ENCODE measurements at regions of chr13 and their contacts with region 1.

Region 1: DNA sequence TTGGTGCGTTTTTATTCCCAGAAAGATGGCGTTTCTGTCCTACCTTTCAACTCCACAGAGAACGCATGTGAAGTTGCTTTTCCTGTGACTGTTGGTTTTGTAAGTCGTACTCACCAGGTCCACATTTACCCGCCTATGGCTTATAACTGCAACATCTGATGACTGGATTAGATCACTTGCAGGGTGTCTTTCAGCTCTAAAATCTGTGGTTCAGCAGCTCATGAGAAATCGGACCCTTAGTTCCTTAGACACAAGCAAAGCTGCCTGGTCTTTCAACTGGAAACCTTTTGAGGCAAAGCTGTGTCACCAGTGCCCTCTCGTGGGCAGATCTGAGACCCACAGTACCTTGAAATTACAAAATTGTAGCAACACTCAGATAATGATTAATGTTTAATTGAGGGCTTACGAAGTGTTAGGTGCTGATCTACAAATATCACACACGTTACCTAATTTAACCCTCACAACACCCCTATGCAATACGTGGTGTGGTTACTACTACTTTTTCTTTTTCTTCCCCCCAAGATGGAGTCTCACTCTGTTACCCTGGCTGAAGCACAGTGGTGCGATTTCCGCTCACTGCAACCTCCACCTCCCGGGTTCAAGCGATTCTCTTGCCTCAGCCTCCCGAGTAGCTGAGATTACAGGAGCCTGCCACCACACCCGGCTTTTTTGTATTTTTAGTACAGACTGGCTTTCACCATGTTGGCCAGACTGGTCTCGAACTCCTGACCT is 65.4 kb downstream of the RUBCNL start:
- DNase-seq: peak; percentile 34
- H3K4me3 ChIP-seq: no peak overlapping the region
- H3K27ac ChIP-seq: no peak overlapping the region
- H3K4me1 ChIP-seq: peaks cover 9% of the 10 kb centered on the region
- H3K27me3 ChIP-seq: no peaks in the 10 kb centered on the region
- CTCF ChIP-seq: peak; percentile 79 to 85

Region 2: GRCh38 chr13:45511310-45512097 is 810.2 kb before region 1 on chr13:
- CTCF ChIA-PET with region 1: no interaction called
- dilution Hi-C with region 1: no loop called
- in situ Hi-C with region 1: no loop called
- intact Hi-C with region 1: loop called (anchors 1 kb)
- DNase-seq: peak; percentile 69
- H3K4me3 ChIP-seq: no peak overlapping the region
- H3K27ac ChIP-seq: peak overlapping the region; percentile 90
- H3K4me1 ChIP-seq: peaks cover 13% of the 10 kb centered on the region
- H3K27me3 ChIP-seq: no peaks in the 10 kb centered on the region
- CTCF ChIP-seq: peak; percentile 75 to 85

Region 3: DNA sequence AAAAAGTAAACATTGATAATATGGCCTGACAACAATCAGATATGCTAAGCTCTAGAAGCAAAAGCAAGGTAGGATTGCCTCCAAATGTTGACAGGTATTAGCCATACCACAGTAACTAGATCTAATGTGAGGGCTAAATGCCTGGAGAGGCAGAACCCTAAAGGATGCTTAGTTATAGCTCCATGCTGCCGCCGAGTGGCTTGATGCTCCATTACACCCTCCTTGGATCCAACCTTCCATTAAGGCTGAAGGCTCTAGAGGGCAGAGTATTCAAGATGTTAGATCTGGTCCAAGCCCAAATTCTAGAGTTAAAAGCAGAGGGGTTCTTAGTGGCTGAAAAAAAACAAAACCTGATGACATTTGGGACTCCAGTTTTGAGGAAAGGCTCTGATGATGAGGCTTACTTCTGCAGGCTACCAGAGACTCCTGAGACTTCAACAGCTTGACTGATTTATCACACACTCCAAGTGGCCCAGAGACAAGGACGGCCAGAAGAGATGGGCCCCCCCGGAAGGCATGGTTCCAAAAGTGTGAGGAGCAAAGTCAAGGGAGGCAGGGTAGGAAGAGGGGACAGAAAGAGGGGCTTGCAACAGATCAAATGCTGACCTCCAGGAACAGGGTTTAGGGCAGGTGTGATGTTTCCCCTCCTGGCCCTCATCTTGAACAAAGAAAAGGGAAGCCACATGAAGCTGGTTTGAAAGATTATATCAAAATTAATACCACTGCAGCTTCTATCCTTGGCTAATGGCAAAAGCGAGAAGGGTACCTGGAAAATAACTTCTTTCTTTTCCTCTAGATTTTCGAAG is 194.9 kb before region 1 on chr13:
- CTCF ChIA-PET with region 1: interaction called, 9 read pairs
- dilution Hi-C with region 1: no loop called
- in situ Hi-C with region 1: no loop called
- intact Hi-C with region 1: loop called (anchors 2 kb)
- DNase-seq: peak; percentile 74
- H3K4me3 ChIP-seq: no peak overlapping the region
- H3K27ac ChIP-seq: no peak overlapping the region
- H3K4me1 ChIP-seq: peaks cover 6% of the 10 kb centered on the region
- H3K27me3 ChIP-seq: no peaks in the 10 kb centered on the region
- CTCF ChIP-seq: peak; percentile 98

Region 4: DNA sequence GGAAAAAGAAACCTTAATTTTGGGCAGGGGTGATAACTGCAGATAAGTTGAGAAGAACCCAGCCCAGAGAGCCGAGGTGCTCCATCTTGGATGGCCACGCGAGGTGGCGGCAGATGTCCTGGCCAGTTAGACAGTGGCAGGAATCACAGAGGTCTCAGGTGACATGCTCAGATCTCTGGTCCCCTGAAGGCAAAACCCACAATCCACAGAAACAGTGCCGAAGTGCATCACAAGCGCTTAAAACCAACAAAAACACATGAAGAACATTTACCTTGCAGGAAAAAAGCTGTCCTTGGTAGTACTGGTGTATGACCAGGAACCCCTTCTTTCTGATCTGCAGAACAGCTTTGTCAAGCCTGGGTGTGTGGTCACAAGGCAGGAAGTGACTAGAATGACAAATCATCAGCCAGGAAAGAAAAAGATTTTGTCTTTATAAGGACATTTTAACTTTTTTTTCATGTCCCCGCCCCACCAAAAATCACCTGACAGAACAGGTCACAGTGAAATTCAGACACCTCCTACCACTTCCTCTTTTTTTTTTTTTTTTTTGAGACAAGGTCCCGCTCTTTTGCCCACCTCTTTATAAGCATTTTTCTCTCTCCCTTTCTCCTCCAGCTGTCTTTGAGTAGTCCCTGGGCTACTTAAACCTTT is 139.7 kb before region 1 on chr13 and contains the start of gene LCP1:
- CTCF ChIA-PET with region 1: no interaction called
- dilution Hi-C with region 1: no loop called
- in situ Hi-C with region 1: no loop called
- intact Hi-C with region 1: loop called (anchors 1 kb)
- DNase-seq: peak; percentile 10
- H3K4me3 ChIP-seq: no peak within 1 kb of the TSS
- H3K27ac ChIP-seq: no peak within 1 kb of the TSS
- H3K4me1 ChIP-seq: peaks cover 5% of the 10 kb centered on the region
- H3K27me3 ChIP-seq: no peaks in the 10 kb centered on the region
- CTCF ChIP-seq: no peak
- total RNA-seq, gene LCP1: 149 to 454 TPM

Region 5: DNA sequence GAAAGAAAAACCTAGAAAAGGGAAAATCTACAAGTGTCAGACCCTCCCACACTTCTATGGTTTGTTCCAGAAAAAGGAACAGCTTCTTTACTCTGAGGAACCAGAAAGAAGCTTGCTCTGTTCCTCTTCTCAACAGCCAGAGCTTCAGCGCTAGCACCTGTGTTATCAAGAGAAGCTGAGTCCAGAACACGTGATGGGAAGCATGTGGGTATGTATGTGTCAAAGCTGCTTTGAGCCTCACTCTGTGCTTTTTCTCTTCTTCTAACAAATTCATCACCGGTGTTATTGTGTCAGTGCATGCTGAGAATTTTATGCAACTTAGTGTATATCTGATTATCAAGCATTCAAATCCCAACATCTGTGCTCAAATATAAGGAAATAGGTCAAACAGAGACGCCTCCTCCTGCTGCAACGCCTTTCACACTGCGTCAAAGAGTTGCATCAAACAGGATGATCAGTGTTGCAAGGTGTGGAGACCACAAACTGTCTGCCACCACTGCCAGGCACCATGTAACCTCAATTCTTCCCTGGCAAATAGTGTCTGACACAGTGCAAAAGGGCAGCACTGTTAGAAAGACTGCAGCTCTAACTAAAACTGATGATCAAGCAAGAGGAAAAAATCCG is 26.1 kb before region 1 on chr13:
- CTCF ChIA-PET with region 1: interaction called, 4 read pairs
- dilution Hi-C with region 1: no loop called
- in situ Hi-C with region 1: no loop called
- intact Hi-C with region 1: loop called (anchors 2 kb)
- DNase-seq: peak; percentile 73
- H3K4me3 ChIP-seq: no peak overlapping the region
- H3K27ac ChIP-seq: peak overlapping the region; percentile 88
- H3K4me1 ChIP-seq: peaks cover 26% of the 10 kb centered on the region
- H3K27me3 ChIP-seq: no peaks in the 10 kb centered on the region
- CTCF ChIP-seq: no peak

Region 6: DNA sequence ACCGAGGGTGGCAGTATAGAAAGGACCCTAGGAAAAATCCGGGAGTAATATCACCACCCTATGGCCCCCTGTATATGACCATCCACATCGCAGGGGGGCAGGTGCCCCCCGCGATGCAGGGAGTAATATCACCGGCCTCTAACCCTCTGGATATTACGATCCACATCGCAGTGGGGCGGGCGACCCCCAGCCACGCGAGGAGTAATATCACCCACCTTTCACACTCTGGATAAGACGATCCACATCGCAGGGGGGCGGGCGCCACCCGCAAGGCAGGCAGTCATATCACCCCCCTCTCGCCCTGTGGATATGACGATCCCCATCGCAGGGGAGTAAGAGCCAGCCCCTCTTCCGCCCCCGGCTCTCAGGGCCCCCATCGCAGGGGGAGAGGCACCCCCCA is 142.1 kb after region 1 on chr13:
- CTCF ChIA-PET with region 1: no interaction called
- dilution Hi-C with region 1: no loop called
- in situ Hi-C with region 1: no loop called
- intact Hi-C with region 1: loop called (anchors 10 kb)
- DNase-seq: no peak
- H3K4me3 ChIP-seq: no peak overlapping the region
- H3K27ac ChIP-seq: no peak overlapping the region
- H3K4me1 ChIP-seq: no peaks in the 10 kb centered on the region
- H3K27me3 ChIP-seq: no peaks in the 10 kb centered on the region
- CTCF ChIP-seq: no peak

Measured in mammary epithelial cell (primary cell).